Naive thymus-derived CD4-positive, alpha-beta T cell (primary cell): ENCODE measurements at regions of chr1 and their contacts with region 1.

Region 1: GRCh38 chr1:225777583-225778336 is at the start of gene SRP9:
- DNase-seq: peak; percentile 97 to 100 (median 99)
- ATAC-seq: peak; percentile 98
- H3K4me3 ChIP-seq: peak within 1 kb of the TSS; percentile 94
- H3K4me3 Mint-ChIP-seq: no peak within 1 kb of the TSS
- H3K27ac ChIP-seq: peak within 1 kb of the TSS; percentile 97
- H3K27ac Mint-ChIP-seq: no peak within 1 kb of the TSS
- H3K4me1 ChIP-seq: peaks cover 22 to 51% of the 10 kb centered on the region in 2 donors
- H3K4me1 Mint-ChIP-seq: peaks cover 17 to 54% (median 36%) of the 10 kb centered on the region in 7 donors
- H3K27me3 ChIP-seq: no peaks in the 10 kb centered on the region
- H3K27me3 Mint-ChIP-seq: no peaks in the 10 kb centered on the region
- total RNA-seq, gene SRP9: 76.1 to 193 (median 145) TPM

Region 2: GRCh38 chr1:225447650-225448089 is 330.1 kb before region 1 on chr1:
- CTCF ChIA-PET with region 1: no interaction called
- POLR2A ChIA-PET with region 1: interaction called, 22 read pairs
- intact Hi-C with region 1: loop called (anchors 1 kb)
- DNase-seq: no peak
- ATAC-seq: no peak
- H3K4me3 ChIP-seq: no peak overlapping the region
- H3K4me3 Mint-ChIP-seq: peak overlapping the region in 2 of 10 donors; percentile 16 to 56
- H3K27ac ChIP-seq: no peak overlapping the region
- H3K27ac Mint-ChIP-seq: peak overlapping the region in 8 of 9 donors; percentile 21 to 94 (median 55)
- H3K4me1 ChIP-seq: peaks cover 21 to 37% of the 10 kb centered on the region in 2 donors
- H3K4me1 Mint-ChIP-seq: peaks cover 51 to 72% (median 62%) of the 10 kb centered on the region in 7 donors
- H3K27me3 ChIP-seq: no peaks in the 10 kb centered on the region
- H3K27me3 Mint-ChIP-seq: peaks cover 0 to 2% (median 0%) of the 10 kb centered on the region in 5 donors

Region 3: GRCh38 chr1:225554216-225554812 is 223.4 kb before region 1 on chr1:
- CTCF ChIA-PET with region 1: no interaction called
- POLR2A ChIA-PET with region 1: no interaction called
- intact Hi-C with region 1: loop called in 1 of 2 experiments (anchors 1 kb)
- DNase-seq: peak in 5 of 9 donors; percentile 25 to 34 (median 30)
- ATAC-seq: peak; percentile 54
- H3K4me3 ChIP-seq: no peak overlapping the region
- H3K4me3 Mint-ChIP-seq: no peak overlapping the region
- H3K27ac ChIP-seq: no peak overlapping the region
- H3K27ac Mint-ChIP-seq: no peak overlapping the region
- H3K4me1 ChIP-seq: no peaks in the 10 kb centered on the region
- H3K4me1 Mint-ChIP-seq: no peaks in the 10 kb centered on the region
- H3K27me3 ChIP-seq: no peaks in the 10 kb centered on the region
- H3K27me3 Mint-ChIP-seq: peaks cover 0 to 16% (median 5%) of the 10 kb centered on the region in 5 donors

Region 4: DNA sequence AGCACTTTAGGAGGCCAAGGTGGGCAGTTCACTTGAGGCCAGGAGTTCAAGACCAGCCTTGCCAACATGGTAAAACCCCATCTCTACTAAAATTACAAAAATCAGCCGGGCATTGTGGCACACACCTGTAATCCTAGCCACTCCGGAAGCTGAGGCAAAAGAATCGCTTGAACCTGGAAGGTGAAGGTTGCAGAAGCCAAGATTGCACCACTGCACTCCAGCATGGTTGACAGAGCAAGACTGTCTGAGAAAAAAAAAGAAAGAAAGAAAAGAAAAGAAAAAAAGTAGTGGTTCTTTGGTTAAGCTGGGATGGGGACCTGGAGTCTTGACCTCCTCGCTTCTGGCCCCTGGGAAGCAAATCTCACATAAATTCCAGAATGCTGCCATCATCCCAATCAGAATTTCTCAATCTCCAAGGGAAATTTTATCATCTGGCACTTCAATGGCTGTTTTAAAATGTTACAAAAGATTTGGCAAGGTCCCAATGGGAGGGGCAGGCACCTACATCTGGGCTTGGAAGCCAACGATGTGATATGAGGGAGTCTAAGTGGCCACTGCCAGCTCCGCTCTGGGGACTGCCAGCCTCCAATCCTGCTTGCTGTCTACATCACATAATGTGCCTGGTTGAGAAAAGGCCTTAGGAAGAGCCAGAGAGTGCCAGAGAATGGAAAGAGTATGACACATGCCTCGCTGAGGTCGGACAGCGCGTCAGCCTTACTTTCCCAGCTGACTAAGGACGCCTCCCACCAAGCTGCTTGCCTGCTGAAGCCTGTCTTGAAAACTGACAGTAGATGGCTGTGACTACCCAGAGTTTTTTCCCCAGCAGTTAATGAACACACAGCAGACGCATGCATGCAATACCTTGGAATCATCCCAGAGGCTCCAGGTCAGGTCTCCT is 42.3 kb before region 1 on chr1:
- CTCF ChIA-PET with region 1: no interaction called
- POLR2A ChIA-PET with region 1: no interaction called
- intact Hi-C with region 1: no loop called
- DNase-seq: no peak
- ATAC-seq: no peak
- H3K4me3 ChIP-seq: no peak overlapping the region
- H3K4me3 Mint-ChIP-seq: no peak overlapping the region
- H3K27ac ChIP-seq: no peak overlapping the region
- H3K27ac Mint-ChIP-seq: no peak overlapping the region
- H3K4me1 ChIP-seq: no peaks in the 10 kb centered on the region
- H3K4me1 Mint-ChIP-seq: no peaks in the 10 kb centered on the region
- H3K27me3 ChIP-seq: no peaks in the 10 kb centered on the region
- H3K27me3 Mint-ChIP-seq: peaks cover 0 to 4% (median 0%) of the 10 kb centered on the region in 5 donors

Region 5: DNA sequence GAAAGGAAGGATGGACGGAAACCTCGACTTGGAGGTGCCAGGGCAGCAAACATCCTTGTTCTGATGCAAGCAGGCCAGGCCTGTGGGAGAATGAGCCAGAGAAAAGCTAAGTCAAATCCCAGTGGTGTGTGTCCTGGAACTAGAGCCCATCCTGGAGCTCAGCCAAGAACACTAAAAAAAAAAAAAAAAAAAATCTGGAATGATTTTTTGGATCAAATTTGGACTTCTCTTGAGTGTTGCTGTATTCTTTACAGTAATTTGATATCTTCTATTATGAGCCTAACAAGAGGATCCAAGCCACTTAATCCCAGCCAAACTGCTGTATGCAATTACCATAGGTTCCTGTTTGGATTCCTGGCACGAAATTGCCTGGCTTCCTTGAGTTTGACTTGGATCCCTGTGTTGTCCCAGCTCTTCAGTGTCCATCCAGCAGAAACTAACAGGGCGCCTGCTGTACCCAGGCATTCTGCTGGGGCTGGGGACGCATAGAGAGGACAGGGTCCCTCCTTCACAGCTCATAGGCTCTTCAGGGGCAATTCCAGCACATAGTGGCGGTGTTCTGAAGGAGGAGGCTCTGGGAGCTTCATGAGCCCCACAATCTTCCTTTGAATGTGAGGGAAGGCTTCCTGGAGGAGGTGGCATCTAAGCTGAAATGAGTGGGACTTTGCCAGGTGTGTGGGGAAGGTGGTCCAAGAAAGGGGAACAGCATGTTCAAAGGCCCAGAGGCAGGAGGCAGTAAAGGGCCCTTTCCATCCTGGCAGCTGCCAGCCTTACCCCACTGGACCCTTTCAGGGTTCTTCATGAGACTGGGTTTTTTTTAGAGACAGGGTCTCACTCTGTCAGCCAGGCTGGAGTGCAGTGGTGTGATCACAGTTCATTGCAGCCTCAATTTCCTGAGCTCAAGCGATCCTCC is 56.9 kb after region 1 on chr1:
- CTCF ChIA-PET with region 1: no interaction called
- POLR2A ChIA-PET with region 1: interaction called, 18 read pairs
- intact Hi-C with region 1: no loop called
- DNase-seq: no peak
- ATAC-seq: no peak
- H3K4me3 ChIP-seq: no peak overlapping the region
- H3K4me3 Mint-ChIP-seq: no peak overlapping the region
- H3K27ac ChIP-seq: no peak overlapping the region
- H3K27ac Mint-ChIP-seq: peak overlapping the region in 1 of 9 donors; percentile 88
- H3K4me1 ChIP-seq: peaks cover 0 to 9% of the 10 kb centered on the region in 2 donors
- H3K4me1 Mint-ChIP-seq: peaks cover 0 to 23% (median 7%) of the 10 kb centered on the region in 7 donors
- H3K27me3 ChIP-seq: no peaks in the 10 kb centered on the region
- H3K27me3 Mint-ChIP-seq: no peaks in the 10 kb centered on the region

Region 6: GRCh38 chr1:225881969-225882693 is 104.4 kb after region 1 on chr1 and contains the start of gene TMEM63A:
- CTCF ChIA-PET with region 1: interaction called, 14 read pairs
- POLR2A ChIA-PET with region 1: interaction called, 54 read pairs
- intact Hi-C with region 1: loop called (anchors 1 kb)
- DNase-seq: peak; percentile 83 to 89 (median 87)
- ATAC-seq: peak; percentile 84
- H3K4me3 ChIP-seq: peak within 1 kb of the TSS; percentile 80
- H3K4me3 Mint-ChIP-seq: peak within 1 kb of the TSS; percentile 89 to 99 (median 97)
- H3K27ac ChIP-seq: peak within 1 kb of the TSS; percentile 90
- H3K27ac Mint-ChIP-seq: peak within 1 kb of the TSS; percentile 91 to 98 (median 96)
- H3K4me1 ChIP-seq: peaks cover 41% of the 10 kb centered on the region in 2 donors
- H3K4me1 Mint-ChIP-seq: peaks cover 37 to 50% (median 48%) of the 10 kb centered on the region in 7 donors
- H3K27me3 ChIP-seq: no peaks in the 10 kb centered on the region
- H3K27me3 Mint-ChIP-seq: peaks cover 0 to 21% (median 0%) of the 10 kb centered on the region in 5 donors
- total RNA-seq, gene TMEM63A: 189 to 611 (median 383) TPM

Region 7: GRCh38 chr1:225923692-225924555 is 146.2 kb after region 1 on chr1 and contains the start of gene PYCR2:
- CTCF ChIA-PET with region 1: interaction called, 3 read pairs
- POLR2A ChIA-PET with region 1: interaction called, 18 read pairs
- intact Hi-C with region 1: loop called (anchors 1 kb)
- DNase-seq: peak; percentile 92 to 97 (median 94)
- ATAC-seq: peak; percentile 99
- H3K4me3 ChIP-seq: peak within 1 kb of the TSS; percentile 100
- H3K4me3 Mint-ChIP-seq: peak within 1 kb of the TSS; percentile 86 to 98 (median 94)
- H3K27ac ChIP-seq: peak within 1 kb of the TSS; percentile 95
- H3K27ac Mint-ChIP-seq: peak within 1 kb of the TSS; percentile 90 to 98 (median 95)
- H3K4me1 ChIP-seq: peaks cover 11 to 65% of the 10 kb centered on the region in 2 donors
- H3K4me1 Mint-ChIP-seq: peaks cover 45 to 75% (median 60%) of the 10 kb centered on the region in 7 donors
- H3K27me3 ChIP-seq: no peaks in the 10 kb centered on the region
- H3K27me3 Mint-ChIP-seq: no peaks in the 10 kb centered on the region
- total RNA-seq, gene PYCR2: 46.4 to 137 (median 109) TPM

Region 8: GRCh38 chr1:226940029-226940805 is 1162.5 kb after region 1 on chr1 and contains the start of gene COQ8A:
- CTCF ChIA-PET with region 1: no interaction called
- POLR2A ChIA-PET with region 1: no interaction called
- intact Hi-C with region 1: loop called in 1 of 2 experiments (anchors 5 kb)
- DNase-seq: peak in 8 of 9 donors; percentile 99 to 100 (median 100)
- ATAC-seq: peak; percentile 95
- H3K4me3 ChIP-seq: peak within 1 kb of the TSS; percentile 84
- H3K4me3 Mint-ChIP-seq: peak within 1 kb of the TSS; percentile 85 to 94 (median 92)
- H3K27ac ChIP-seq: peak within 1 kb of the TSS; percentile 87
- H3K27ac Mint-ChIP-seq: peak within 1 kb of the TSS; percentile 94 to 98 (median 97)
- H3K4me1 ChIP-seq: peaks cover 15 to 34% of the 10 kb centered on the region in 2 donors
- H3K4me1 Mint-ChIP-seq: peaks cover 43 to 67% (median 50%) of the 10 kb centered on the region in 7 donors
- H3K27me3 ChIP-seq: no peaks in the 10 kb centered on the region
- H3K27me3 Mint-ChIP-seq: no peaks in the 10 kb centered on the region
- total RNA-seq, gene COQ8A: 34.1 to 83.4 (median 67.8) TPM